Dorsolateral prefrontal cortex (tissue), 120 donors: ENCODE measurements at regions of chr15 and their contacts with region 1.

Region 1: GRCh38 chr15:77732514-77733335 is 100.0 kb upstream of the LINGO1 start:
- DNase-seq: peak in 4 of 10 donors; percentile 32 to 62 (median 37)
- H3K4me3 ChIP-seq: no peak overlapping the region
- H3K27ac ChIP-seq: peak overlapping the region in 46 of 59 donors; percentile 0 to 71 (median 48)
- H3K27me3 ChIP-seq: no peaks in the 10 kb centered on the region
- CTCF ChIP-seq: no peak

Region 2: GRCh38 chr15:77784395-77785292 is 51.9 kb after region 1 on chr15:
- intact Hi-C with region 1: loop called in 1 of 2 experiments (anchors 5 kb)
- DNase-seq: peak in 3 of 10 donors; percentile 59 to 63 (median 62)
- H3K4me3 ChIP-seq: no peak overlapping the region
- H3K27ac ChIP-seq: peak overlapping the region in 33 of 59 donors; percentile 3 to 82 (median 46)
- H3K27me3 ChIP-seq: no peaks in the 10 kb centered on the region
- CTCF ChIP-seq: peak in 47 of 56 donors; percentile 16 to 56 (median 36)